ENCODE measurements at regions of chr5 and their contacts with region 1.

Region 1: GRCh38 chr5:98773464-98774191 is at the start of gene RGMB:
- DNase-seq: peak; percentile 96
- ATAC-seq: peak; percentile 88
- H3K4me3 ChIP-seq: peak within 1 kb of the TSS; percentile 55 to 94 (median 78)
- H3K4me3 Mint-ChIP-seq: peak within 1 kb of the TSS; percentile 96
- H3K27ac ChIP-seq: peak within 1 kb of the TSS; percentile 63 to 78
- H3K27ac Mint-ChIP-seq: peak within 1 kb of the TSS; percentile 93
- H3K4me1 ChIP-seq: peaks cover 38 to 53% of the 10 kb centered on the region in 2 donors
- H3K4me1 Mint-ChIP-seq: peaks cover 56% of the 10 kb centered on the region
- H3K27me3 ChIP-seq: peaks cover 0 to 17% (median 8%) of the 10 kb centered on the region in 4 experiments
- H3K27me3 Mint-ChIP-seq: peaks cover under 1% of the 10 kb centered on the region
- CTCF ChIP-seq: no peak
- total RNA-seq, gene RGMB: 17.1 and 18.3 TPM in 2 replicates

Region 2: DNA sequence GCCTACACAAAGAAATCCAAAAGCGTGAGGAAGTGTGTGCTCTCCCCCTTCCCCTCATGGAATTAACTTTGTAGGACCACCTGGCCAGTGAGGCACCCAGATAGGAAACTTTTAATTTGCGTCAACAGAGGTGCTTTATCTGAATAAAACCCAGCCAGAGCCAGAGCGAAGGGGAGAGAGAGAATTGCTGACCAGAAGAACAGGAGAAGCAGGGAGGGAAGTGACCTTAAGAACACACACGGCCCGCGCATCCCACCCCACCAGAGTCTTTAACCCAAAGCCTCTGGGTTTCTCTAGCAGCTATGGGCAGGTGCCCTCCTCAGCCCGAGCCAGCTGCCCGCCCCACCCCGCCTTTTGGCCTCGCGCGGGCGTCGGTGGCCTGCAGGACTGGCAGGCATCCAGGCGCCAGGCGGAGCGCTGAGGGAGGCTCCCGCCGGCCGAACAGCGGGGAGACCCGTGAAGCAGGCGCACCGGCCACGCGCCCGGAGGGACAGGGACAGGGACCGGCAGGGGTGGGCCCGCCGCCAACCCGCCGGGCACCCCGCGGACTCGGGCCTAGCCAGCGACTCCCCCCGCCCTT is 1966.5 kb before region 1 on chr5:
- CTCF ChIA-PET with region 1: no interaction called
- POLR2A ChIA-PET with region 1: interaction called, 10 read pairs
- intact Hi-C with region 1: loop called (anchors 2 kb)
- DNase-seq: no peak
- ATAC-seq: peak; percentile 19
- H3K4me3 ChIP-seq: peak overlapping the region; percentile 47 to 86 (median 73)
- H3K4me3 Mint-ChIP-seq: peak overlapping the region; percentile 90
- H3K27ac ChIP-seq: peak overlapping the region; percentile 86 to 90
- H3K27ac Mint-ChIP-seq: peak overlapping the region; percentile 99
- H3K4me1 ChIP-seq: peaks cover 25 to 32% of the 10 kb centered on the region in 2 donors
- H3K4me1 Mint-ChIP-seq: peaks cover 49% of the 10 kb centered on the region
- H3K27me3 ChIP-seq: no peaks in the 10 kb centered on the region
- H3K27me3 Mint-ChIP-seq: no peaks in the 10 kb centered on the region
- CTCF ChIP-seq: no peak

Region 3: GRCh38 chr5:97183100-97183929 is 1590.3 kb before region 1 on chr5 and contains the start of gene RIOK2:
- CTCF ChIA-PET with region 1: interaction called, 5 read pairs
- POLR2A ChIA-PET with region 1: no interaction called
- intact Hi-C with region 1: loop called (anchors 1 kb)
- DNase-seq: peak; percentile 93
- ATAC-seq: peak; percentile 87
- H3K4me3 ChIP-seq: peak within 1 kb of the TSS; percentile 68 to 96 (median 88)
- H3K4me3 Mint-ChIP-seq: peak within 1 kb of the TSS; percentile 97
- H3K27ac ChIP-seq: peak within 1 kb of the TSS; percentile 91 to 99
- H3K27ac Mint-ChIP-seq: peak within 1 kb of the TSS; percentile 100
- H3K4me1 ChIP-seq: peaks cover 12 to 15% of the 10 kb centered on the region in 2 donors
- H3K4me1 Mint-ChIP-seq: peaks cover 33% of the 10 kb centered on the region
- H3K27me3 ChIP-seq: no peaks in the 10 kb centered on the region
- H3K27me3 Mint-ChIP-seq: no peaks in the 10 kb centered on the region
- CTCF ChIP-seq: no peak
- total RNA-seq, gene RIOK2: 32.8 and 37.2 TPM in 2 replicates

Region 4: DNA sequence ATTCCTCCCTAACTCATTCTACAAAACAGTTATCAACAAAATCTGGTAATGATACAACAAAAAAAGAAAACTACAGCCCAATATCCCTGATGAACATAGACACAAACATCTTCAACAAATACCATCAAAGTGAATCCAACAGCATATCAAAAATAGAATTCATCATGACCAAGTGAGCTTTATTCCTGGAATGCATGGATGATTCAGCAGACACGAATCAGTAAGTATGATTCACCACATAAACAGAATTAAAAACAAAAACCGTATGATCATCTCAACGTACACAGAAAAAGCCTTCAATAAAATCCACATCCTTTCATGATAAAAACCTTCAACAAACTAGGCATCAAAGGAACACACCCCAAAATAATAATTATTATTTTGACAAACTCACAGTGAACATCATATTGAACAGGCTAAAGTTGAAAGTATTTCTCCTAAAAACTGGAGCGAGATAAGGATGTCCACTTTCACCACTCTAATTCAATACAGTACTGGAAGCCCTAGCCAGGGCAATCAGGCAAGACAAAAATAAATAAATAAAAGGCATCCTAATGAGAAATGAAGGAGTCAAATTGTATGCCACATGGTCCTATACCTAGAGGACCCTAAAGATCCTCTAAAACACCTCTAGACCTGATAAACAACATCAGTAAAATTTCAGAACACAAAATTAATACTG is 305.3 kb before region 1 on chr5:
- CTCF ChIA-PET with region 1: no interaction called
- POLR2A ChIA-PET with region 1: no interaction called
- intact Hi-C with region 1: no loop called
- DNase-seq: no peak
- ATAC-seq: no peak
- H3K4me3 ChIP-seq: no peak overlapping the region
- H3K4me3 Mint-ChIP-seq: no peak overlapping the region
- H3K27ac ChIP-seq: no peak overlapping the region
- H3K27ac Mint-ChIP-seq: no peak overlapping the region
- H3K4me1 ChIP-seq: peaks cover 4% of the 10 kb centered on the region in 2 donors
- H3K4me1 Mint-ChIP-seq: peaks cover 13% of the 10 kb centered on the region
- H3K27me3 ChIP-seq: no peaks in the 10 kb centered on the region
- H3K27me3 Mint-ChIP-seq: no peaks in the 10 kb centered on the region
- CTCF ChIP-seq: no peak

Region 5: DNA sequence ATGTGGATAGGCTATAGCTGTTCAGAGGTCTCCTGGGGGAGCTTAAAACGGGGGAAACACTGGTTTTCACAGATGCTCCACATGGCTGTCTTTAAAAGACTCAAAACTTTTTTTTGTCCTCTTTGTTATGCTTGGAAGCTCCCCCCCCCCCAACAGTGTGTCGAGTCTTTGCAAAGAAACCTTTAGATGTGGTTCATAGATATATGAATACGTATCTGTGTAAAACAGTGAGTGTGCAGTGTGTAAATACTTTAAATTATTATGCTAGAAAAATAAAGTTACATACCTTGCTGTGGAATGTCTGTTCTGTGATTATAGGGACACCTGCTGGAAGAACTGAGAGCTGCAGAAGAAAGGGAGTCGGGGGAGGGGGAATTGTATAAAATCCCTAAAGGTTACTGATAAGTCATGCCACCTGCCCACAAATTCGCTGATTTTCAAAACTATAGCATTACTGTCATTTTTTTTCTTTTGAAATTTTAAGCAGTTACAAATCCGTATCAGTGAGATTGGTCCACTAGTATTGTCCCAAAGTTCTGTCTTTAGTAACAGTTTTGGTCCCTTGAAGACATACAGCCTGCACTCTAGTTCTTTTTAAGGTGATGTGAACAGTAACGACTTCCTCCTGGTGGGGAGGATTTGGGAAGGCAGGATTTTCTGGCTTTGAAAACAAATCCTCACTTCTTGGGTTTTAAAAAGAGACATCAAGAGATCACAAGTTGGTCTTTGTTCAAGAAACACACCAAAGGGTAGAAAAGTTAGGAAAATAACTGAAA is 22.8 kb after region 1 on chr5:
- CTCF ChIA-PET with region 1: interaction called, 82 read pairs
- POLR2A ChIA-PET with region 1: no interaction called
- intact Hi-C with region 1: loop called (anchors 2 kb)
- DNase-seq: peak; percentile 66
- ATAC-seq: peak; percentile 70
- H3K4me3 ChIP-seq: no peak overlapping the region
- H3K4me3 Mint-ChIP-seq: no peak overlapping the region
- H3K27ac ChIP-seq: no peak overlapping the region
- H3K27ac Mint-ChIP-seq: no peak overlapping the region
- H3K4me1 ChIP-seq: no peaks in the 10 kb centered on the region
- H3K4me1 Mint-ChIP-seq: peaks cover 3% of the 10 kb centered on the region
- H3K27me3 ChIP-seq: no peaks in the 10 kb centered on the region
- H3K27me3 Mint-ChIP-seq: no peaks in the 10 kb centered on the region
- CTCF ChIP-seq: peak; percentile 85

Region 6: GRCh38 chr5:100535060-100536005 is 1761.7 kb after region 1 on chr5 and contains the start of gene FAM174A:
- CTCF ChIA-PET with region 1: no interaction called
- POLR2A ChIA-PET with region 1: no interaction called
- intact Hi-C with region 1: loop called (anchors 2 kb)
- DNase-seq: peak; percentile 97
- ATAC-seq: peak; percentile 91
- H3K4me3 ChIP-seq: peak within 1 kb of the TSS; percentile 57 to 84 (median 83)
- H3K4me3 Mint-ChIP-seq: peak within 1 kb of the TSS; percentile 91
- H3K27ac ChIP-seq: peak within 1 kb of the TSS; percentile 82 to 87
- H3K27ac Mint-ChIP-seq: peak within 1 kb of the TSS; percentile 95
- H3K4me1 ChIP-seq: peaks cover 17 to 19% of the 10 kb centered on the region in 2 donors
- H3K4me1 Mint-ChIP-seq: peaks cover 19% of the 10 kb centered on the region
- H3K27me3 ChIP-seq: no peaks in the 10 kb centered on the region
- H3K27me3 Mint-ChIP-seq: peaks cover 3% of the 10 kb centered on the region
- CTCF ChIP-seq: no peak
- total RNA-seq, gene FAM174A: 6.1 TPM in 2 replicates